Gastrocnemius medialis (tissue), 4 donors: ENCODE measurements at regions of chr22 and their contacts with region 1.

Region 1: DNA sequence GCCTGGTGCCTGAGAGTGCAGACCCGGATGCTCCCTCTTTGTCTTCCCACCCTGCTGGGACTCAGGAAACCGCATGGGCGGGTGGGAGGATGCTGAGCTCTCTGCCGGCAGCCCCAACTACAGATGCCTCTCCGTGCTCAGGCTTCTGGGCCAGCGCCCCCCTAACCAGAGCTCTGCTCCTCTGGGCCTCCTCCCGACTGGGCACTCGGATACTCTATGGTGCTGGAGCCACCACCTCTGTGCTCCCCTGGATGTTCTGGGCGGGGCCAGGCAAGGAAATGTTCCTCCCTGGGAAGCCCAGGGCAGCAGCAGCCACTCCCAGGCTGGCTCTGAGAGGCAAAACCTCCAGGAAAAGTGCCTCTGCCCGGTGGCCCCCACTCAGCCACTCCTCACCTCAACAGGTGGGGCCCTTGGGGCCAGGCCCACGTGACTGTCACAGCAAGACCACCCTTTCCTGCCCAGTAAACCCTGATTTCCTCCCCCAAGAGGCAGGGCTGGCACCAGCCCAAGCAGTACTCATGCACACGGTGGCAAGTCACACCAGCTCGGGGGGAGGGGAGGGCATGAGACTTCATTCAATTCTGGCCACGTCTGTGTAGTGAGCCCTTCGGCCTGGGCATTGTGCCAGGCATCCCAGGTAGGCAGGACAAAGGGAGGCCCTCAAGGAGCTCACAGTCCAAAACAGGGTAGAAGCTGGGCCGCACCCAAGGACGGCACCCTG is 54.7 kb upstream of the TCF20 start:
- DNase-seq: no peak
- ATAC-seq: no peak
- H3K4me3 ChIP-seq: no peak overlapping the region
- H3K27ac ChIP-seq: no peak overlapping the region
- H3K4me1 ChIP-seq: no peaks in the 10 kb centered on the region
- H3K27me3 ChIP-seq: peaks cover 0 to 21% (median 0%) of the 10 kb centered on the region in 3 donors
- CTCF ChIP-seq: no peak
- POLR2A ChIP-seq: no peak

Region 2: DNA sequence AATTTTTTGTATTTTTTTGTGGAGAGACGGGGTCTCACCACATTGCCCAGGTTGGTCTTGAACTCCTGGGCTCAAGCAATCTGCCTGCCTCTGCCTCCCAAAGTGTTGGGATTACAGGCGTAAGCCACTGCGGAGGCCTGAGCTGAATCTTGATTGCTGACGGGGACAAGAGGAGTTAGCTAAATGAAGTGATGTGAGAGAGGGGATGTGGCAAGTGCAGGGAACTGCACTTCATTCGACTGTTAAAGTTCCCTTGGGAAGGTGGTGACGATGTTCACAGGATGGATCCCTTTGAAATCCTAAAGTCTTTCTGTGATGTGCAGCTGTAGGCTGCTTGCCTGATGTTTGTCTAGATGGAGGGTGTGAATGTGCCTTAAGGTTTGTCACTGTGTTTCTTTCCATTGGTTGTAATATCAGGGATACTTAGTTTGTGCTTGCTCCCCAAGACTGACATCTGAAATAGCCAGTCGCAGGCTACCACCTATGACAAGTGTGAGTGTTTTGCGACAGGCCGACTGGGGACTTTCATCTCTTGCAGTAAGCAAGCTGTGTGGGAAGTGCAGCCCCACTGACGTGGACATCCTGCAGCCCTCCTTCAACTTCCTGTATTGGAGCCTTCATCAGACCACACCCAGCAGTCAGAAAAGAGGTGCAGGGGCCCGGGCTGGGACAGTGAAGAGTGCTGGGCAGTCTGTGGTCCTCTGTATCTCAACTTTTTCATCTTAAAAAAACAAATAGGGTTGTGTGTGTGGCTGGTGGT is 544.2 kb before region 1 on chr22:
- in situ Hi-C with region 1: no loop called
- intact Hi-C with region 1: loop called (anchors 10 kb)
- DNase-seq: peak; percentile 20 to 65
- ATAC-seq: peak in 1 of 2 donors; percentile 58
- H3K4me3 ChIP-seq: peak overlapping the region in 1 of 4 donors; percentile 11
- H3K27ac ChIP-seq: no peak overlapping the region
- H3K4me1 ChIP-seq: no peaks in the 10 kb centered on the region
- H3K27me3 ChIP-seq: no peaks in the 10 kb centered on the region
- CTCF ChIP-seq: no peak
- POLR2A ChIP-seq: no peak